Naive thymus-derived CD4-positive, alpha-beta T cell (primary cell): ENCODE measurements at regions of chrX and their contacts with region 1.

Region 1: DNA sequence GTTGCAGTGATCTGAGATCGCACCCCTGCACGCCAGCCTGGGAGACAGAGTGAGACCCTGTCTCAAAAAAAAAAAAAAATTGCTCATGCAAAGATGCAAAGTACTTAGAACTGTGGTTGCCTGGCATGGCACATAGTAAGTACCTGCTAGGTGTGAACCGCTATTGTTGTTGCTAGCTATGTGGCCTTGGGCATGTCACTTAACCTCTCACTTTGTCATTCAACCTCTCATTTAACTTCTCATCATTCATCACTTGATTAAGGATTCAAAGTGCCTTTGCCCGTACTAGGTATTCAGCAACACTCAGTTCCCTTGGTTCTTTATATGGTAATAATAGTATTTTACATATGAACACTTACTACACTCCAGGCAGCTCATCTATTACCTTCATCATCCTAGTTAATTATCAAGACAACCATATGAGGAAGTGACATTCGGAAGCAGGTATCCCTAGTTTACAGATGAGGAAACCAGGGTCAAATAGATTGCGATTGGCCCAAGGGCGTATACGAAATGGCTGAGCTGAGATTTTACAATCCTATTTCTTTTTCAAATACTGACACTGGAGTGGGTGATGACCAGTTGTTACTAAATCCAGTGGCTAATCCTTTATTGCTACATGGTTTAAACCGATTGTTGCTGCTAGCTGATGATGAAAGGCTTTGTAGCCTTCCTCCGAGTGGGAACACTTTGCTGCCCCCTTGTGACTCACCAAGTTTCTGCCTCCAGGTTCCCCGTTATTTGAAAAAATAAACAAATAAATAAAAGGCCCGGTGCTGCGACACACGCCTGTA is 28.8 kb upstream of the SOWAHD start:
- DNase-seq: peak; percentile 23 to 77 (median 58)
- ATAC-seq: peak; percentile 85
- H3K4me3 ChIP-seq: no peak overlapping the region
- H3K4me3 Mint-ChIP-seq: no peak overlapping the region
- H3K27ac ChIP-seq: no peak overlapping the region
- H3K27ac Mint-ChIP-seq: peak overlapping the region in 3 of 9 donors; percentile 14 to 41 (median 25)
- H3K4me1 ChIP-seq: no peaks in the 10 kb centered on the region
- H3K4me1 Mint-ChIP-seq: peaks cover 0 to 13% (median 10%) of the 10 kb centered on the region in 7 donors
- H3K27me3 ChIP-seq: no peaks in the 10 kb centered on the region
- H3K27me3 Mint-ChIP-seq: no peaks in the 10 kb centered on the region

Region 2: GRCh38 chrX:119606280-119607015 is 123.2 kb before region 1 on chrX and contains the start of gene NKRF:
- CTCF ChIA-PET with region 1: interaction called, 6 read pairs
- POLR2A ChIA-PET with region 1: interaction called, 9 read pairs
- intact Hi-C with region 1: loop called (anchors 1 to 2 kb)
- DNase-seq: peak; percentile 76 to 92 (median 88)
- ATAC-seq: peak; percentile 88
- H3K4me3 ChIP-seq: peak within 1 kb of the TSS; percentile 71
- H3K4me3 Mint-ChIP-seq: peak within 1 kb of the TSS; percentile 93 to 100 (median 94)
- H3K27ac ChIP-seq: peak within 1 kb of the TSS; percentile 90
- H3K27ac Mint-ChIP-seq: peak within 1 kb of the TSS; percentile 91 to 99 (median 98)
- H3K4me1 ChIP-seq: peaks cover 5 to 11% of the 10 kb centered on the region in 2 donors
- H3K4me1 Mint-ChIP-seq: peaks cover 6 to 48% (median 39%) of the 10 kb centered on the region in 7 donors
- H3K27me3 ChIP-seq: no peaks in the 10 kb centered on the region
- H3K27me3 Mint-ChIP-seq: peaks cover 0 to 4% (median 0%) of the 10 kb centered on the region in 5 donors
- total RNA-seq, gene NKRF: 9.9 to 16.4 (median 14.0) TPM

Region 3: DNA sequence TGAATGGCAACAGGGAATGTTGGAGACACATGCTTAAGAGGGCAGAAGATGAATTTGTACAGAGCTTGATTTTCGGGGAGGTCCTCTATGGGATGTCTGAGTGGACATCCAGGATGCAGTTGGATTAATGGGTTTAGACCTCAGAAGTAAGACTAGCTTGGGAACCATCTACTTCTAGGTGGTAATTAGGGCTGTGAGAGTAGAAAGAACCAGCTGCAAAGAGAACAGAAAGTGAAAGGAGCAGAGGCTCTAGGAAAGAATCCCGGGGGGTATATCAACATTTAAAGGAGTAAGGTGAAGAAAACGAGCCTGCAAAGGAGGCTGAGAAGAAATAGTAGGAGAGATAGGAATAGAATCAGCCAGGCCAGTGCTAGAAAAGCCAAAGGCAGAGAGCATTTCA is 94.4 kb before region 1 on chrX:
- CTCF ChIA-PET with region 1: no interaction called
- POLR2A ChIA-PET with region 1: no interaction called
- intact Hi-C with region 1: no loop called
- DNase-seq: no peak
- ATAC-seq: no peak
- H3K4me3 ChIP-seq: no peak overlapping the region
- H3K4me3 Mint-ChIP-seq: peak overlapping the region in 1 of 10 donors; percentile 2
- H3K27ac ChIP-seq: no peak overlapping the region
- H3K27ac Mint-ChIP-seq: peak overlapping the region in 7 of 9 donors; percentile 0 to 84 (median 54)
- H3K4me1 ChIP-seq: no peaks in the 10 kb centered on the region
- H3K4me1 Mint-ChIP-seq: peaks cover 0 to 19% (median 17%) of the 10 kb centered on the region in 7 donors
- H3K27me3 ChIP-seq: no peaks in the 10 kb centered on the region
- H3K27me3 Mint-ChIP-seq: no peaks in the 10 kb centered on the region

Region 4: GRCh38 chrX:119655125-119655524 is 74.5 kb before region 1 on chrX:
- CTCF ChIA-PET with region 1: interaction called, 10 read pairs
- POLR2A ChIA-PET with region 1: no interaction called
- intact Hi-C with region 1: no loop called
- DNase-seq: peak in 2 of 9 donors; percentile 49 to 73
- ATAC-seq: peak; percentile 45
- H3K4me3 ChIP-seq: no peak overlapping the region
- H3K4me3 Mint-ChIP-seq: peak overlapping the region in 9 of 10 donors; percentile 4 to 76 (median 45)
- H3K27ac ChIP-seq: peak overlapping the region; percentile 57
- H3K27ac Mint-ChIP-seq: peak overlapping the region; percentile 41 to 92 (median 86)
- H3K4me1 ChIP-seq: peaks cover 0 to 18% of the 10 kb centered on the region in 2 donors
- H3K4me1 Mint-ChIP-seq: peaks cover 18 to 47% (median 36%) of the 10 kb centered on the region in 7 donors
- H3K27me3 ChIP-seq: no peaks in the 10 kb centered on the region
- H3K27me3 Mint-ChIP-seq: no peaks in the 10 kb centered on the region

Region 5: GRCh38 chrX:119753571-119754257 is 24.1 kb after region 1 on chrX:
- CTCF ChIA-PET with region 1: interaction called, 6 read pairs
- POLR2A ChIA-PET with region 1: interaction called, 4 read pairs
- intact Hi-C with region 1: loop called in 1 of 2 experiments (anchors 1 kb)
- DNase-seq: peak in 7 of 9 donors; percentile 77 to 89 (median 80)
- ATAC-seq: peak; percentile 83
- H3K4me3 ChIP-seq: no peak overlapping the region
- H3K4me3 Mint-ChIP-seq: peak overlapping the region; percentile 40 to 81 (median 70)
- H3K27ac ChIP-seq: peak overlapping the region; percentile 76
- H3K27ac Mint-ChIP-seq: peak overlapping the region; percentile 90 to 99 (median 96)
- H3K4me1 ChIP-seq: peaks cover 38 to 39% of the 10 kb centered on the region in 2 donors
- H3K4me1 Mint-ChIP-seq: peaks cover 21 to 50% (median 40%) of the 10 kb centered on the region in 7 donors
- H3K27me3 ChIP-seq: no peaks in the 10 kb centered on the region
- H3K27me3 Mint-ChIP-seq: no peaks in the 10 kb centered on the region